Tibial artery (tissue), 4 donors: ENCODE measurements at regions of chr14 and their contacts with region 1.

Region 1: DNA sequence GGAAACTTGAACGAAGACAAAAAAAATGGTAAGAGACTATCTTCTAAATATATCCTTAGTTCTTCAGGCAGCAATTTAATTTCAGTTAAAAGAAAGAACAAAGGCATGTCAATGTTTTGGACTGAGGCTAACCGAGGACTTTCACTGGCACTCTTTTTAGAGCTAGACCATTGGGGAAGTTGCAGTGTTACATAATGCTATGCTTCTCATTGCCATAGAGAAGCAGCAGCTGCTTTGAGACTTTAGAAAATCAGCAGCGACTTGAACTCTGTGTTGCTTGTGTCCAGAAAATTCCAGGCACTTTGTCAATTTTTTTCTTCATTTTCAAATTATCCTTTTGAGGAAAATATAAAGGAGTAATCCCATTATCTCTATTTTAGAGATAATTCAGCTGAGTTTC is 964.2 kb downstream of the NRXN3 start:
- DNase-seq: no peak
- H3K4me3 ChIP-seq: no peak overlapping the region
- H3K27ac ChIP-seq: no peak overlapping the region
- H3K4me1 ChIP-seq: no peaks in the 10 kb centered on the region
- H3K27me3 ChIP-seq: no peaks in the 10 kb centered on the region
- CTCF ChIP-seq: no peak

Region 2: GRCh38 chr14:79229383-79229909 is 95.1 kb after region 1 on chr14:
- intact Hi-C with region 1: loop called (anchors 5 kb)
- DNase-seq: no peak
- H3K4me3 ChIP-seq: no peak overlapping the region
- H3K27ac ChIP-seq: no peak overlapping the region
- H3K4me1 ChIP-seq: no peaks in the 10 kb centered on the region
- H3K27me3 ChIP-seq: no peaks in the 10 kb centered on the region
- CTCF ChIP-seq: no peak